ENCODE measurements at regions of chrX and their contacts with region 1.

Region 1: DNA sequence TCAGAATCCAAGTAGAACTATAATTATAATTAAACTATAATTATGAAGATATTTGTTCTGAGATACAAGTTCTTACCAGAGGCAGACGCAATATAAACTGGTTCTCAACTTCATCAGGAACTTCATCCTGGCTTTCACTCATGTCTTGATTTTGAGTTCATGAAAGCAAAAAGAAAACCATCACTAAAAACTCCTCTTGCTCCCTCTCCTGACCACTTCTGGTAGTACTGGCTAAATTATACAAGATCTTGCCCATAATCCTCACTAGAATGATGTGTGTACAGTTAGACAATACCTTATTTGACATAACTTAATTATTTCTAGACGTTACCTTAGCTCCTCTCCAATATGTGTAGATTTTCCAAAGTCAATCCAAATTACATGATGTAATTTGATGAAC is 3.7 kb downstream of the TAF7L start:
- DNase-seq: peak; percentile 56
- H3K4me3 Mint-ChIP-seq: no peak overlapping the region
- H3K27ac Mint-ChIP-seq: no peak overlapping the region
- H3K4me1 Mint-ChIP-seq: no peaks in the 10 kb centered on the region
- H3K27me3 Mint-ChIP-seq: peaks cover 24% of the 10 kb centered on the region
- CTCF ChIP-seq: peak; percentile 64

Region 2: DNA sequence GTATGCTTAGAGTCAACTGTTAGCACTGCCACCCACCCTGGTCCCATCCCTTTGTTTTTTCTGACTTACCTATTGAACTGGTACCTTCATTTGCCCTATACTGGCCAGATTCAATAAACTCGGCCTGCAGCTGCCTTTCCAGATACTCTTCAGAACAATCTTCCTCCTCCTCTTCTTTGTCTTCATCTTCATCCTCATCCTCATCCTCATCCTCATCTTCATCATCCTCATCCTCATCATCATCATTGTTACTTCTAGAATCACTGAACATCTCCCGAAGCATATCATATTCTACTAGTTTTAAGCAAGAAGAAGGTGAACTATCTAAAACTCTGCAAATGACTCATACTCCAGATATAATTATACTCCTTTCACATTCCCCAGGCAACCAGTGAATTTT is 11.2 kb before region 1 on chrX:
- CTCF ChIA-PET with region 1: interaction called, 11 read pairs
- POLR2A ChIA-PET with region 1: no interaction called
- intact Hi-C with region 1: no loop called
- DNase-seq: no peak
- H3K4me3 Mint-ChIP-seq: no peak overlapping the region
- H3K27ac Mint-ChIP-seq: no peak overlapping the region
- H3K4me1 Mint-ChIP-seq: no peaks in the 10 kb centered on the region
- H3K27me3 Mint-ChIP-seq: peaks cover 54% of the 10 kb centered on the region
- CTCF ChIP-seq: no peak

Region 3: DNA sequence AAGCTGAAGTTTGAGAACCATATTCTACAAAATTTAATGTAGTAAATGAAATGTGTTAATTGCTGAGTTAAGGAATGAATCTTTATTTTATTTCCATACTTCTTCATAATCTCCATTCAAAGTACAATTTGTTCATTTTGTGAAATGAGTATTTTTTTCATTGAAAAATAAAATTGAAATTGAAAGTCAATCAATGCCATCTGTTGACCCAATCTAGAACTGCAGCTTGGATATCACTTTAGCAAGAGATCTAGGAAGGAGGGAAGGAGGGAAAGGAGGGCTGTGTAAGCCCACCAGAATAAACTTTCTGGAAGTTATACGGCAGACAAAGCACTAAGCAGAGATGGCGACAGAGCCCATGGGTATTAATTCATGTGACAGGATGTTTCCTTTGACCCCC is 516.0 kb after region 1 on chrX:
- CTCF ChIA-PET with region 1: no interaction called
- POLR2A ChIA-PET with region 1: no interaction called
- intact Hi-C with region 1: no loop called
- DNase-seq: peak; percentile 16
- H3K4me3 Mint-ChIP-seq: no peak overlapping the region
- H3K27ac Mint-ChIP-seq: no peak overlapping the region
- H3K4me1 Mint-ChIP-seq: no peaks in the 10 kb centered on the region
- H3K27me3 Mint-ChIP-seq: peaks cover 30% of the 10 kb centered on the region
- CTCF ChIP-seq: peak; percentile 68

Measured in MCF 10A (cell line).